ENCODE measurements at regions of chr1 and their contacts with region 1.

Region 1: DNA sequence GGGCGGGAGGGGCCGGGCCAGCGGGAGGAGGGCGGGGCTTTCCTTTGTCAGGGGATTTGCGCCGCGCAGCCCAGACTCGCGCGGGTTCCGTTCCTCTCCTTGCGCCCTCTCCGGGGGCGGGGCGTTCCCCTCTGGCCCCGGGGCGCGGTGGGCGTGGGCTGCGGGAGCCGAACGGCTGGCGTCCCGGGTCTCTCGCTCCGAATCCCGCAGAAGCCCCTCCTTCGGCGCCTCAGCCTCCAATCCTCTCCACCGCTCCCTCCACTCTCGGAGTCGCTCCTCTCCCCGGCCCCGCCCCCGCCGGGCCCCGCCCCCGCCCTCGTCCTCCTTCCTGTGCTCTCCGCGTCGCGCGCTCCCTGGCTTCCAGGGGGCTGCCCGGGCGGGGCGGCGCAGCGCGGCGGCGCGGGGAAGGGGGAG is 82.8 kb upstream of the BMP8A start:
- DNase-seq: peak; percentile 99
- H3K4me3 ChIP-seq: peak overlapping the region; percentile 93
- H3K27ac ChIP-seq: peak overlapping the region; percentile 89
- H3K4me1 ChIP-seq: peaks cover 54% of the 10 kb centered on the region
- H3K27me3 ChIP-seq: no peaks in the 10 kb centered on the region
- CTCF ChIP-seq: no peak

Region 2: GRCh38 chr1:39189592-39190041 is 219.0 kb before region 1 on chr1:
- CTCF ChIA-PET with region 1: no interaction called
- POLR2A ChIA-PET with region 1: no interaction called
- intact Hi-C with region 1: loop called (anchors 5 kb)
- DNase-seq: no peak
- H3K4me3 ChIP-seq: no peak overlapping the region
- H3K27ac ChIP-seq: no peak overlapping the region
- H3K4me1 ChIP-seq: peaks cover 55% of the 10 kb centered on the region
- H3K27me3 ChIP-seq: no peaks in the 10 kb centered on the region
- CTCF ChIP-seq: no peak

Region 3: GRCh38 chr1:39266269-39266668 is 142.4 kb before region 1 on chr1:
- CTCF ChIA-PET with region 1: interaction called, 14 read pairs
- POLR2A ChIA-PET with region 1: no interaction called
- intact Hi-C with region 1: loop called (anchors 2 kb)
- DNase-seq: peak; percentile 65
- H3K4me3 ChIP-seq: no peak overlapping the region
- H3K27ac ChIP-seq: no peak overlapping the region
- H3K4me1 ChIP-seq: peaks cover 39% of the 10 kb centered on the region
- H3K27me3 ChIP-seq: no peaks in the 10 kb centered on the region
- CTCF ChIP-seq: peak; percentile 62

Region 4: DNA sequence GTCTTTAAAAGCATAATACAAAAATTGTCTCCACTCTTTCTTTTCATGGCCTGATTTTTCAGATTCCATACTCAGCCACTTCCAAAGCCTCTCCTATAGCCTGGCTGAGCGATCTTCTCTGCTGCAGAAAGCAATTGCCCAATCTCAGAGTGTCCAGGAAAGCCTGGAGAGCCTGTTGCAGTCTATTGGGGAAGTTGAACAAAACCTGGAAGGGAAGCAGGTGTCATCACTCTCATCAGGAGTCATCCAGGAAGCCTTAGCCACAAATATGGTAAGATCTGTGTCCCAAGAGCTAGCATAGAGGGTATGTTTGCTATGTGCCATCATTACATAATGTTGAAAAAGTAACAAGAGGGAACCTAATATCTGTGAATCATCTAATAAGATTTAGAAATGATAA is 47.9 kb before region 1 on chr1:
- CTCF ChIA-PET with region 1: interaction called, 10 read pairs
- POLR2A ChIA-PET with region 1: no interaction called
- intact Hi-C with region 1: no loop called
- DNase-seq: no peak
- H3K4me3 ChIP-seq: no peak overlapping the region
- H3K27ac ChIP-seq: no peak overlapping the region
- H3K4me1 ChIP-seq: no peaks in the 10 kb centered on the region
- H3K27me3 ChIP-seq: no peaks in the 10 kb centered on the region
- CTCF ChIP-seq: no peak

Measured in A673 (cell line).